Left cardiac atrium (tissue), 4 donors: ENCODE measurements at regions of chr19 and their contacts with region 1.

Region 1: DNA sequence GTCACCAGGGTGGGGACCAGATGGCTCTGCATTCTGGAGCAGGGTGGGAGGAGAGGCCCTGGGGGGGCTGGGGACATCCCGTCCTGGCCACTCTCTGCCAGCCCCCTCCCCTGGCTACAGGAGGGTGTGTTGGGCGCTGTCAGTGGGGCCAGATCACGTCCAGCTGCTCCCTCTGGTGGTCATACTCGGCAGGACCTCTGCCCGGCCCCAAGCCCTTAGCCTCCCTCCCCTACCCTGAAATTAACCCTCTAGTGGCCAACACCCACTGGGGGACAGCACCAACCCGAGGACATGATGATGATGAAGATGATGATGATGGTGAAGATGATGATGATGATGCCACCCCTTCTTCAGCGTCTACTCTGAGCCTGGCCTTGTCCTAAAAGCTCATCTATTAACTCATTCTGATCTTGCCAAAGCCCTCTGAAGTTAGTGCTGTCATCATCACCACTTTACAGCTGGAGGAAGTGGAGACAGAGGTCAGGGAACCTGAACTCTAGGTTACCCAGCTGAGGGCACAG is 590 bp upstream of the LGI4 start:
- DNase-seq: peak; percentile 84
- ATAC-seq: peak; percentile 55 to 65

Region 2: GRCh38 chr19:34851353-34851752 is 284.1 kb before region 1 on chr19:
- intact Hi-C with region 1: no loop called
- DNase-seq: no peak
- ATAC-seq: no peak

Region 3: GRCh38 chr19:35066691-35067563 is 68.5 kb before region 1 on chr19:
- intact Hi-C with region 1: loop called in 1 of 2 experiments (anchors 10 kb)
- DNase-seq: peak; percentile 90
- ATAC-seq: peak; percentile 87 to 88

Region 4: GRCh38 chr19:35114353-35115176 is 20.9 kb before region 1 on chr19:
- intact Hi-C with region 1: loop called in 1 of 2 experiments (anchors 2 kb)
- DNase-seq: peak; percentile 70
- ATAC-seq: peak; percentile 84 to 90